Caco-2 (cell line): ENCODE measurements at regions of chr5 and their contacts with region 1.

Region 1: GRCh38 chr5:130871346-130872086 is 293.5 kb downstream of the HINT1 start:
- DNase-seq: peak in 1 of 2 experiments; percentile 58
- H3K4me3 ChIP-seq: no peak overlapping the region
- H3K4me3 Mint-ChIP-seq: no peak overlapping the region
- H3K27ac Mint-ChIP-seq: no peak overlapping the region
- H3K4me1 ChIP-seq: peaks cover 7% of the 10 kb centered on the region; the same call in 1 of the 2 replicates
- H3K4me1 Mint-ChIP-seq: peaks cover 15% of the 10 kb centered on the region
- H3K27me3 ChIP-seq: no peaks in the 10 kb centered on the region
- H3K27me3 Mint-ChIP-seq: no peaks in the 10 kb centered on the region
- CTCF ChIP-seq: peak; percentile 70 to 73

Region 2: DNA sequence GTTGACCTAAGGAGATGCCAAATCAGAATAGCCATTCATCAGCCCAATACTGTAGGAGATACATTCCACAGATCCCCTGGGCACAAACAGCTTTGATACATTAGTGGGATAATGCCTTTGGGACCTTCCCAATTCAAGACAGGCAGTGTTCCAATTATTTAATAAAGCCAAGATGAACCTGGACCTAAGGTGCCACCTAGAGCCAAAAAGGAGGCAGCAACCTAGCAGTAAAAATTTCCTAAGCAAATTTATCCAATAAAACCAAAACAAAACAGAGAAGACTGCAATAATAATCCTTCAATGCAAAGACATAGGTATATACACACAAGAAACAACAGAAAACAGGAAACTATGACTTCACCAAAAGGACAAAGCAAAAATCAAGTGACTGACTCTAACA is 40.6 kb after region 1 on chr5:
- CTCF ChIA-PET with region 1: no interaction called
- POLR2A ChIA-PET with region 1: no interaction called
- intact Hi-C with region 1: loop called (anchors 1 kb)
- DNase-seq: no peak
- H3K4me3 ChIP-seq: no peak overlapping the region
- H3K4me3 Mint-ChIP-seq: no peak overlapping the region
- H3K27ac Mint-ChIP-seq: no peak overlapping the region
- H3K4me1 ChIP-seq: no peaks in the 10 kb centered on the region
- H3K4me1 Mint-ChIP-seq: peaks cover 7% of the 10 kb centered on the region
- H3K27me3 ChIP-seq: no peaks in the 10 kb centered on the region
- H3K27me3 Mint-ChIP-seq: no peaks in the 10 kb centered on the region
- CTCF ChIP-seq: peak in 1 of 2 experiments; percentile 16

Region 3: GRCh38 chr5:131005963-131006684 is 134.6 kb after region 1 on chr5:
- CTCF ChIA-PET with region 1: interaction called, 5 read pairs
- POLR2A ChIA-PET with region 1: no interaction called
- intact Hi-C with region 1: loop called (anchors 1 kb)
- DNase-seq: peak in 1 of 2 experiments; percentile 17
- H3K4me3 ChIP-seq: no peak overlapping the region
- H3K4me3 Mint-ChIP-seq: no peak overlapping the region
- H3K27ac Mint-ChIP-seq: no peak overlapping the region
- H3K4me1 ChIP-seq: no peaks in the 10 kb centered on the region
- H3K4me1 Mint-ChIP-seq: no peaks in the 10 kb centered on the region
- H3K27me3 ChIP-seq: no peaks in the 10 kb centered on the region
- H3K27me3 Mint-ChIP-seq: peaks cover 10% of the 10 kb centered on the region
- CTCF ChIP-seq: peak; percentile 27 to 32